ENCODE measurements at regions of chr3 and their contacts with region 1.

Region 1: DNA sequence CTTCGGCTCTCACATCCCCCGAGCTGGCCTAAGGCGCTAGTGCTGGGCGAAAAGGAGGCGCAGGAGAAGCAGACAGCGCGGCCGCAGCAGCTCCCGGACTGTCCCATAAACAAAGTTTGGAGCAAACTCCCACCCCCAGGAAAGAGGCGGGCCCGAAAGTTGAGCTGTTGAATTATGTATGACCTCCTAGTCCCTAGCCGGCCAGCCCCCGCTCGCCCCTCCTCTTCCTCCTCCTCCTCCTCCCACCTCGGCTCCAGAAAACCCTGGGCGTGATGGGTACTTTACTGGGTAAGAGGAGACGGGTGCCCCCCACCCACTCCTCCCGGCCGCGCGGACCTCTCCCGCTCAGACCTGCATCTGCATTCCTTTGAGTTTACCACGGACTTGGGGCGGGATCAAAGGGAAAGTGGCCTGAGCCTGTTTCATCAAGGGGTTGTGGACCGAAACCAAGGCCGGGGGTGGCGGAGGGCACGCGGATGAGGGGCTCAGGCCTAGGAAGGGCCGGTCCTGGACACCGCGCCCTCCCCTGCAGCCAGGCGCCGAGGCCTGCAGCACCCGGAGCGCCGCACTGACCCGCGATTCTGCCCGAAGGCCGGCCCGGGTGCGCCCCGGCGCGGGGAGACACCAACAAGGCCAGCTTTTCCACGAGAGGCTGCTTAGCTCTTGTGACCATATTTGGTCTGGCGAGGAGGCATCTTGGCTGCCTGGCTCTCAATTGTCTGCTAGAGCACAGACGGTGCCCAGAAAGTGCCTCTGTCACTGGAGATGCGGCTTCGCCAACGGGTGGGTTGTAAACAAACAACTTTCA is at the start of gene WWTR1:
- DNase-seq: peak; percentile 84
- H3K4me3 ChIP-seq: peak within 1 kb of the TSS; percentile 46 to 82 (median 56)
- H3K27ac ChIP-seq: peak within 1 kb of the TSS; percentile 87 to 97 (median 92)
- H3K4me1 ChIP-seq: peaks cover 0 to 35% (median 25%) of the 10 kb centered on the region in 4 donors
- H3K27me3 ChIP-seq: peaks cover 86% of the 10 kb centered on the region
- CTCF ChIP-seq: peak in 1 of 5 experiments; percentile 9
- EP300 ChIP-seq: peak; percentile 35
- POLR2A ChIP-seq: peak; percentile 81
- total RNA-seq, gene WWTR1: 40.3 to 80.4 (median 67.6) TPM

Region 2: DNA sequence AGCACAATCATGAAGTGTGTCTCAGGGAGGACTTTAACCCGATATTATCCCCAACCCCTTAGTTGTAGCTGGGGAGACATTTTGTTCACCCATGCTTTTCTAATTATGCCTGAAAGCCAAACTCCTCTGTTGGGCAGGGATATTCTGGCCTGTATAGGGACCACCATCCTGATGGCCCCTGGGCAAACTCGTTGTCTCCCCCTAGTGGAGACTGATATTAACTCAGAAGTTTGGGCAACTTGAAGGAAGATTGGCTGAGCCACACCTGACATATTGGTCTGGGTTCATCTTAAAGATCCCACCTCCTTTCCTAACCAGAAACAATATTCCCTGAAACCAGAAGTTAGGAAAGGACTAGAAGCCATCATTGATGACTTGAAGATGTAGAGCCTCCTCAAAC is 367.0 kb before region 1 on chr3:
- in situ Hi-C with region 1: no loop called
- intact Hi-C with region 1: no loop called
- DNase-seq: no peak
- H3K4me3 ChIP-seq: no peak overlapping the region
- H3K27ac ChIP-seq: no peak overlapping the region
- H3K4me1 ChIP-seq: no peaks in the 10 kb centered on the region
- H3K27me3 ChIP-seq: no peaks in the 10 kb centered on the region
- CTCF ChIP-seq: peak in 4 of 5 experiments; percentile 13 to 33 (median 30)
- EP300 ChIP-seq: no peak
- POLR2A ChIP-seq: no peak

Region 3: GRCh38 chr3:149534671-149535332 is 123.3 kb before region 1 on chr3:
- in situ Hi-C with region 1: loop called in 1 of 4 experiments (anchors 10 kb)
- intact Hi-C with region 1: loop called (anchors 5 kb)
- DNase-seq: no peak
- H3K4me3 ChIP-seq: no peak overlapping the region
- H3K27ac ChIP-seq: peak overlapping the region; percentile 38 to 75 (median 60)
- H3K4me1 ChIP-seq: peaks cover 12 to 32% (median 22%) of the 10 kb centered on the region in 4 donors
- H3K27me3 ChIP-seq: no peaks in the 10 kb centered on the region
- CTCF ChIP-seq: no peak
- EP300 ChIP-seq: no peak
- POLR2A ChIP-seq: no peak

Region 4: GRCh38 chr3:149547938-149548668 is 110.0 kb before region 1 on chr3:
- in situ Hi-C with region 1: loop called in 1 of 4 experiments (anchors 10 kb)
- intact Hi-C with region 1: no loop called
- DNase-seq: peak; percentile 51
- H3K4me3 ChIP-seq: no peak overlapping the region
- H3K27ac ChIP-seq: peak overlapping the region; percentile 65 to 83 (median 76)
- H3K4me1 ChIP-seq: peaks cover 0 to 22% (median 13%) of the 10 kb centered on the region in 4 donors
- H3K27me3 ChIP-seq: no peaks in the 10 kb centered on the region
- CTCF ChIP-seq: no peak
- EP300 ChIP-seq: no peak
- POLR2A ChIP-seq: no peak

Measured in transverse colon (tissue), 4 donors.